CD4-positive, alpha-beta memory T cell (primary cell): ENCODE measurements at regions of chr11 and their contacts with region 1.

Region 1: DNA sequence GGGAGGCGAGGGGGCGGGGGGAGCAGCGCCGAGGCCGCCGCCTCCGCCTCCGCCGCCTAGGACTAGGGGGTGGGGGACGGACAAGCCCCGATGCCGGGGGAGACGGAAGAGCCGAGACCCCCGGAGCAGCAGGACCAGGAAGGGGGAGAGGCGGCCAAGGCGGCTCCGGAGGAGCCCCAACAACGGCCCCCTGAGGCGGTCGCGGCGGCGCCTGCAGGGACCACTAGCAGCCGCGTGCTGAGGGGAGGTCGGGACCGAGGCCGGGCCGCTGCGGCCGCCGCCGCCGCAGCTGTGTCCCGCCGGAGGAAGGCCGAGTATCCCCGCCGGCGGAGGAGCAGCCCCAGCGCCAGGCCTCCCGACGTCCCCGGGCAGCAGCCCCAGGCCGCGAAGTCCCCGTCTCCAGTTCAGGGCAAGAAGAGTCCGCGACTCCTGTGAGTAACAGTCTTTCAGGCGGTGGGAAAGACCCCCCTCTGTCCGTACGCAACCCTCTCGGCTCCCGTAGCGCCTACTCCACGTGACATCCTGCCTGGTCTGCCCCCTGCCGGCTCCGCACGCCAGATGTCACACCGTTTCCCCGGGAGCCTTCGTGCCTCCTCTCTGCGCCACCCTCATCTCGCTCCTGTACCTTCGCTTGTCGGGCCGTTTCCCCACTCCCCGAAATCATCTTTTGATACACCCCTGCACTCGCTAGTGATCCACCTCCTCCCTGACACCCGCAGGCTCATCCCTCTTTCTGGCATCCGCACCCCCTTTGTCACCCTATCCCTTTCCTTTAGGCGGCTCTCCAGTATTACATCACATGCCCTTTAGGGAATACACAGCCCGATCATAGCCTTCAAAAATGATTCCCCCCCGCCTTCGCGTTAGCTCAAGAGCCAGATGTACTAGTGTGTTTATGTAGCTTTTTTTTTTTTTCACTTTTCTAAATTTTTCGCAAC is 598 bp downstream of the ZFP91 start:
- DNase-seq: peak; percentile 89 to 94 (median 90)
- H3K4me3 ChIP-seq: peak overlapping the region; percentile 63 to 81
- H3K4me3 Mint-ChIP-seq: peak overlapping the region; percentile 93 to 99 (median 98)
- H3K27ac ChIP-seq: peak overlapping the region; percentile 99
- H3K27ac Mint-ChIP-seq: peak overlapping the region; percentile 98 to 100 (median 100)
- H3K4me1 ChIP-seq: peaks cover 70% of the 10 kb centered on the region
- H3K4me1 Mint-ChIP-seq: peaks cover 37 to 86% (median 58%) of the 10 kb centered on the region in 4 donors
- H3K27me3 ChIP-seq: no peaks in the 10 kb centered on the region
- H3K27me3 Mint-ChIP-seq: peaks cover 0 to 3% of the 10 kb centered on the region in 2 donors

Region 2: GRCh38 chr11:57335343-57336110 is 1243.9 kb before region 1 on chr11 and contains the start of gene SSRP1:
- CTCF ChIA-PET with region 1: no interaction called
- POLR2A ChIA-PET with region 1: interaction called, 5 read pairs
- intact Hi-C with region 1: loop called (anchors 2 kb)
- DNase-seq: peak; percentile 87 to 92 (median 88)
- H3K4me3 ChIP-seq: peak within 1 kb of the TSS; percentile 55 to 87
- H3K4me3 Mint-ChIP-seq: peak within 1 kb of the TSS; percentile 86 to 98 (median 94)
- H3K27ac ChIP-seq: peak within 1 kb of the TSS; percentile 85
- H3K27ac Mint-ChIP-seq: peak within 1 kb of the TSS; percentile 96 to 99 (median 98)
- H3K4me1 ChIP-seq: peaks cover 25% of the 10 kb centered on the region
- H3K4me1 Mint-ChIP-seq: peaks cover 23 to 29% (median 25%) of the 10 kb centered on the region in 4 donors
- H3K27me3 ChIP-seq: no peaks in the 10 kb centered on the region
- H3K27me3 Mint-ChIP-seq: no peaks in the 10 kb centered on the region
- total RNA-seq, gene SSRP1: 69.0 to 74.3 TPM

Region 3: GRCh38 chr11:57657194-57658022 is 922.1 kb before region 1 on chr11 and contains the start of gene CLP1:
- CTCF ChIA-PET with region 1: no interaction called
- POLR2A ChIA-PET with region 1: no interaction called
- intact Hi-C with region 1: loop called (anchors 1 kb)
- DNase-seq: peak; percentile 98 to 99 (median 98)
- H3K4me3 ChIP-seq: peak within 1 kb of the TSS; percentile 91 to 96
- H3K4me3 Mint-ChIP-seq: peak within 1 kb of the TSS; percentile 94 to 100 (median 98)
- H3K27ac ChIP-seq: peak within 1 kb of the TSS; percentile 84
- H3K27ac Mint-ChIP-seq: peak within 1 kb of the TSS; percentile 86 to 100 (median 97)
- H3K4me1 ChIP-seq: peaks cover 16% of the 10 kb centered on the region
- H3K4me1 Mint-ChIP-seq: peaks cover 15 to 30% (median 27%) of the 10 kb centered on the region in 4 donors
- H3K27me3 ChIP-seq: no peaks in the 10 kb centered on the region
- H3K27me3 Mint-ChIP-seq: no peaks in the 10 kb centered on the region
- total RNA-seq, gene CLP1: 14.1 to 16.0 TPM

Region 4: GRCh38 chr11:57792060-57792541 is 787.4 kb before region 1 on chr11:
- CTCF ChIA-PET with region 1: no interaction called
- POLR2A ChIA-PET with region 1: no interaction called
- intact Hi-C with region 1: loop called (anchors 2 kb)
- DNase-seq: peak; percentile 84 to 93 (median 88)
- H3K4me3 ChIP-seq: peak overlapping the region in 1 of 2 donors; percentile 23
- H3K4me3 Mint-ChIP-seq: peak overlapping the region; percentile 58 to 87 (median 76)
- H3K27ac ChIP-seq: peak overlapping the region; percentile 61
- H3K27ac Mint-ChIP-seq: peak overlapping the region; percentile 84 to 99 (median 97)
- H3K4me1 ChIP-seq: peaks cover 35% of the 10 kb centered on the region
- H3K4me1 Mint-ChIP-seq: peaks cover 26 to 39% (median 32%) of the 10 kb centered on the region in 4 donors
- H3K27me3 ChIP-seq: no peaks in the 10 kb centered on the region
- H3K27me3 Mint-ChIP-seq: no peaks in the 10 kb centered on the region

Region 5: DNA sequence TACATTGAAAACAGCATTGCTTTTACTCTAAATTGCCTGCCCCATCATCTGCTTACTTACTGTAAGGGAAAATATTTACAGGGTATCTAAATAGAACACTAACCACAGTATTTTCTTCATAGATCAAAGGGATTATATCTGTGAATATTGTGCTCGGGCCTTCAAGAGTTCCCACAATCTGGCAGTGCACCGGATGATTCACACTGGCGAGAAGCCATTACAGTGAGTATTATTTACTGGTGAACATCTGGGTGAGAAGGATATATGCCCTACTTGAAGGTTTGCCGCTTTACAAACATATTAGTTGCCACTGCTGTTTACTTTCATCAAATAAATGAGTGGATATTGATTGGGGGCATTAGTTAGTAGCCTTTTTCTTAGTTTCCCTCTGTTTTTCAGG is 37.1 kb after region 1 on chr11:
- CTCF ChIA-PET with region 1: interaction called, 3 read pairs
- POLR2A ChIA-PET with region 1: no interaction called
- intact Hi-C with region 1: loop called (anchors 1 kb)
- DNase-seq: no peak
- H3K4me3 ChIP-seq: no peak overlapping the region
- H3K4me3 Mint-ChIP-seq: no peak overlapping the region
- H3K27ac ChIP-seq: no peak overlapping the region
- H3K27ac Mint-ChIP-seq: peak overlapping the region in 1 of 7 donors; percentile 9
- H3K4me1 ChIP-seq: no peaks in the 10 kb centered on the region
- H3K4me1 Mint-ChIP-seq: peaks cover 0 to 3% (median 2%) of the 10 kb centered on the region in 4 donors
- H3K27me3 ChIP-seq: no peaks in the 10 kb centered on the region
- H3K27me3 Mint-ChIP-seq: no peaks in the 10 kb centered on the region

Region 6: GRCh38 chr11:58647141-58647699 is 67.8 kb after region 1 on chr11:
- CTCF ChIA-PET with region 1: no interaction called
- POLR2A ChIA-PET with region 1: no interaction called
- intact Hi-C with region 1: no loop called
- DNase-seq: no peak
- H3K4me3 ChIP-seq: no peak overlapping the region
- H3K4me3 Mint-ChIP-seq: no peak overlapping the region
- H3K27ac ChIP-seq: no peak overlapping the region
- H3K27ac Mint-ChIP-seq: no peak overlapping the region
- H3K4me1 ChIP-seq: no peaks in the 10 kb centered on the region
- H3K4me1 Mint-ChIP-seq: peaks cover 0 to 4% (median 0%) of the 10 kb centered on the region in 4 donors
- H3K27me3 ChIP-seq: no peaks in the 10 kb centered on the region
- H3K27me3 Mint-ChIP-seq: peaks cover 0 to 5% of the 10 kb centered on the region in 2 donors

Region 7: DNA sequence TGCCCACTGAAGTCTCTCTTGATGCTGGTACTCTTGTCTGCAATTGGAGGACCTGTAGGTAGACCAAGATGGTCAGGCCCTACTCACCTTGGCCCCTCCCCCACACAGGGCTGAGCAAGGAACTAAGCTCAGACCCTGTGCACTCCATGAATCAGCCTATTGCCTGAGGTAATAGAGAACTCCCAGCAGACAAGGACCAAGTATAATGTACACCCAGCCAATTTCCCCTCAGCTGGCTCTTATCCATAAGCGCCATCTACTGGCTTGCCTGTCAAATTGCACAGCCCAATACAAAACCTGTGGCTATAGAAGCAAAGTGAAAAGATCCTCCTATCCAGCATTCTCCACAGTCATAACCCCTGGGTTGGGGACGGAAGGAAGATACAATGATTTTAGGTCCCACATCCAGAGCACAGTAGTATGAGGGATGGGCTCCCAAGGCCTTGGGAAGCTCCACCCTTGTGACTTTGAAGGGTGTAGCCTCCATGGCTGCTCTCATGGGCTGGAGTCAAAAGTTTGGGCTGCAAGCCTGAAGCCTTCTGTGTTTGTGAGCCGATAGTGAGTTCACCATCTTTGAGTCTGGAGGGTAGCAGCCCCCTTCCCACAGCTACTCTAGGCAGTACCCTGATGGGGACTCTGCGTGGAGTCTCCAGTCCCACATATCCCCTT is 209.0 kb after region 1 on chr11:
- CTCF ChIA-PET with region 1: no interaction called
- POLR2A ChIA-PET with region 1: no interaction called
- intact Hi-C with region 1: loop called (anchors 5 kb)
- DNase-seq: peak in 4 of 5 donors; percentile 36 to 49 (median 42)
- H3K4me3 ChIP-seq: no peak overlapping the region
- H3K4me3 Mint-ChIP-seq: no peak overlapping the region
- H3K27ac ChIP-seq: no peak overlapping the region
- H3K27ac Mint-ChIP-seq: no peak overlapping the region
- H3K4me1 ChIP-seq: no peaks in the 10 kb centered on the region
- H3K4me1 Mint-ChIP-seq: no peaks in the 10 kb centered on the region
- H3K27me3 ChIP-seq: no peaks in the 10 kb centered on the region
- H3K27me3 Mint-ChIP-seq: peaks cover 4 to 8% of the 10 kb centered on the region in 2 donors

Region 8: DNA sequence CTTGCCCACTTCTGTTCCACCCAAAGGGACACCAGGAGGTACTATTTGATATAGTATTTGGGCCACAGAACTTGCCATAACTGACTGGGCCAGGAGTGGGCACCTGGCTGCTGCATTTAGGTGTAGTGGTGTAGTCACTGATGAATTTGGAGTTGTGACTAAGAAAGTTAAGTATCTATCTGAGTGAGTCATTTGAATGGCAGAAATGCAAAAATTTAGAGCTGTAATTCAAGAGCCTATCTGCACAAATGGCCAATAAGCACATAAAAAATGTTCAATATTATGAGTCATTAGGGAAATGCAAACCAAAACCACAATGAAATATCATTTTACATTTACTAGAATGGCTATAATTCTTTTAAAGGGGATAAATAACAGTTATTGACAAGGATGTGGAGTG is 250.3 kb after region 1 on chr11:
- CTCF ChIA-PET with region 1: no interaction called
- POLR2A ChIA-PET with region 1: no interaction called
- intact Hi-C with region 1: no loop called
- DNase-seq: no peak
- H3K4me3 ChIP-seq: no peak overlapping the region
- H3K4me3 Mint-ChIP-seq: no peak overlapping the region
- H3K27ac ChIP-seq: no peak overlapping the region
- H3K27ac Mint-ChIP-seq: no peak overlapping the region
- H3K4me1 ChIP-seq: no peaks in the 10 kb centered on the region
- H3K4me1 Mint-ChIP-seq: no peaks in the 10 kb centered on the region
- H3K27me3 ChIP-seq: no peaks in the 10 kb centered on the region
- H3K27me3 Mint-ChIP-seq: peaks cover 0 to 11% of the 10 kb centered on the region in 2 donors

Region 9: DNA sequence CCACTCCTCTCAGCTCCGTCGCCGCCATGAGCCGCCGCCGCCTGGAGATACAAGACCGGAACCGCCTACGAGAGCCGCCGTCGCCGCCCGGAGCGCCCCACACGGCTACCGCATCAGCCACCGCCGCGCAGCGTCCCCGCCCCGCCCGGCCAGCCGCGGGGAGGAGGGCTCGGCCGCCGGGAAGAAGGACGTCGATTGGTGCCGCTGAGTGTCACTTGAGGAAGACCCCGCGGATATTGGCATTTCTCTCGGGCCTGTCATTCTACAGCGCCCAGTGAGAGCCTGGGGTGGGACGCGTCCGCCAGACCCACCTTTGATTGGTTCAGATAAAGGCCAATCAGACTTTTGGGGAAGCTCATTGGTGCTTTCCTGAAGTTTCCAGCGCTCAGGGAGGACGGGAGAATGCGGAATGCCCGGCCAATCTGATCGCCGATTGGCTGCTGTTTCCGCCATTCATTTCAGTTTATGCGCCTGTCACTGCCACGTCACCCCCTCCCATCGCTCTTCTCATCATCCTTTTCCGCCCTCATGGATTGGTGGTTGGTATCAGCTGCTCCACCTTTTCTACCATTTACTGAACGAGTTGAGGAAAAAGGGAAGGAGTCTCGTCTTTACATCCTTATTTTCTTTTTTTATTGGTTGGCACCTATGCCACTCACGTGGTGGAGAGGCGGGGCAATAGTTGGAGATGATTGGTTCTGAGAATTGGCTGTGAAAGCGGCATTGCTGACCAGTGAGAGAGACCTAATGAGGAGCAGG is 1036.4 kb after region 1 on chr11 and contains the start of gene OSBP:
- CTCF ChIA-PET with region 1: no interaction called
- POLR2A ChIA-PET with region 1: no interaction called
- intact Hi-C with region 1: loop called (anchors 1 kb)
- DNase-seq: peak; percentile 98 to 100 (median 100)
- H3K4me3 ChIP-seq: peak within 1 kb of the TSS; percentile 84 to 86
- H3K4me3 Mint-ChIP-seq: peak within 1 kb of the TSS; percentile 93 to 99 (median 96)
- H3K27ac ChIP-seq: peak within 1 kb of the TSS; percentile 95
- H3K27ac Mint-ChIP-seq: peak within 1 kb of the TSS; percentile 83 to 99 (median 98)
- H3K4me1 ChIP-seq: peaks cover 48% of the 10 kb centered on the region
- H3K4me1 Mint-ChIP-seq: peaks cover 29 to 53% (median 42%) of the 10 kb centered on the region in 4 donors
- H3K27me3 ChIP-seq: no peaks in the 10 kb centered on the region
- H3K27me3 Mint-ChIP-seq: no peaks in the 10 kb centered on the region
- total RNA-seq, gene OSBP: 55.3 to 55.6 TPM